H1 (cell line): ENCODE measurements at regions of chr22 and their contacts with region 1.

Region 1: GRCh38 chr22:20238536-20238900 is 29.6 kb downstream of the RTN4R start:
- DNase-seq: peak; percentile 34 to 87
- H3K4me3 ChIP-seq: no peak overlapping the region
- H3K27ac ChIP-seq: no peak overlapping the region
- H3K4me1 ChIP-seq: peaks cover 0 to 16% (median 7%) of the 10 kb centered on the region in 4 experiments; a peak in 5 of 7 replicates
- H3K27me3 ChIP-seq: no peaks in the 10 kb centered on the region
- CTCF ChIP-seq: peak; percentile 92 to 95 (median 94)
- EP300 ChIP-seq: no peak
- POLR2A ChIP-seq: no peak
- RAD21 ChIP-seq: peak; percentile 87 to 91

Region 2: DNA sequence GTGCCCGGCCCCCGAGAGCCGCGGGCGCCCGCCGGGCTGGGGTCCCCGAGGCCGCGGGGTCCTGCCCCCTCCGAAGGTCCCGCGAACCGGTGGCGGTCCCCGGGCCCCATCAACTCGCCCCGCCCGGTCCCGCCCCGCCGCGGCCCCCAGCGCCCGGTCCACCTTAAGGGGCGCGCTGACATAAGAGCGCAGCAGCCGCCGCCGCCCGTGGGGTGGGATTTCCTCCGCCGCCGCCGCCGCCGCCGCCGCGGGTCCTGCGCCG is 107.0 kb before region 1 on chr22 and contains the start of gene ZDHHC8:
- CTCF ChIA-PET with region 1: no interaction called
- POLR2A ChIA-PET with region 1: no interaction called
- DNase-seq: no peak
- H3K4me3 ChIP-seq: peak within 1 kb of the TSS; percentile 53 to 76 (median 58)
- H3K27ac ChIP-seq: no peak within 1 kb of the TSS; the same call in 1 of the 2 replicates
- H3K4me1 ChIP-seq: peaks cover 0 to 12% (median 7%) of the 10 kb centered on the region in 4 experiments; a peak in 4 of 7 replicates
- H3K27me3 ChIP-seq: no peaks in the 10 kb centered on the region; a peak in 2 of 7 replicates
- CTCF ChIP-seq: no peak
- EP300 ChIP-seq: no peak
- POLR2A ChIP-seq: no peak
- RAD21 ChIP-seq: no peak
- total RNA-seq, gene ZDHHC8: 64.0 and 65.6 TPM in 2 replicates

Region 3: GRCh38 chr22:20156611-20157429 is 81.7 kb before region 1 on chr22:
- CTCF ChIA-PET with region 1: interaction called, 93 read pairs
- POLR2A ChIA-PET with region 1: no interaction called
- DNase-seq: peak; percentile 79 to 98
- H3K4me3 ChIP-seq: no peak overlapping the region
- H3K27ac ChIP-seq: no peak overlapping the region
- H3K4me1 ChIP-seq: peaks cover 0 to 7% (median 4%) of the 10 kb centered on the region in 4 experiments; a peak in 4 of 7 replicates
- H3K27me3 ChIP-seq: no peaks in the 10 kb centered on the region
- CTCF ChIP-seq: peak; percentile 97 to 99 (median 99)
- EP300 ChIP-seq: no peak
- POLR2A ChIP-seq: no peak
- RAD21 ChIP-seq: peak; percentile 100

Region 4: GRCh38 chr22:20186183-20186870 is 52.2 kb before region 1 on chr22:
- CTCF ChIA-PET with region 1: interaction called, 43 read pairs
- POLR2A ChIA-PET with region 1: no interaction called
- DNase-seq: peak; percentile 61 to 69
- H3K4me3 ChIP-seq: no peak overlapping the region
- H3K27ac ChIP-seq: no peak overlapping the region
- H3K4me1 ChIP-seq: peaks cover 0 to 4% (median 2%) of the 10 kb centered on the region in 4 experiments; a peak in 2 of 7 replicates
- H3K27me3 ChIP-seq: no peaks in the 10 kb centered on the region
- CTCF ChIP-seq: peak; percentile 54 to 73 (median 64)
- EP300 ChIP-seq: no peak
- POLR2A ChIP-seq: no peak
- RAD21 ChIP-seq: peak; percentile 20 to 53

Region 5: DNA sequence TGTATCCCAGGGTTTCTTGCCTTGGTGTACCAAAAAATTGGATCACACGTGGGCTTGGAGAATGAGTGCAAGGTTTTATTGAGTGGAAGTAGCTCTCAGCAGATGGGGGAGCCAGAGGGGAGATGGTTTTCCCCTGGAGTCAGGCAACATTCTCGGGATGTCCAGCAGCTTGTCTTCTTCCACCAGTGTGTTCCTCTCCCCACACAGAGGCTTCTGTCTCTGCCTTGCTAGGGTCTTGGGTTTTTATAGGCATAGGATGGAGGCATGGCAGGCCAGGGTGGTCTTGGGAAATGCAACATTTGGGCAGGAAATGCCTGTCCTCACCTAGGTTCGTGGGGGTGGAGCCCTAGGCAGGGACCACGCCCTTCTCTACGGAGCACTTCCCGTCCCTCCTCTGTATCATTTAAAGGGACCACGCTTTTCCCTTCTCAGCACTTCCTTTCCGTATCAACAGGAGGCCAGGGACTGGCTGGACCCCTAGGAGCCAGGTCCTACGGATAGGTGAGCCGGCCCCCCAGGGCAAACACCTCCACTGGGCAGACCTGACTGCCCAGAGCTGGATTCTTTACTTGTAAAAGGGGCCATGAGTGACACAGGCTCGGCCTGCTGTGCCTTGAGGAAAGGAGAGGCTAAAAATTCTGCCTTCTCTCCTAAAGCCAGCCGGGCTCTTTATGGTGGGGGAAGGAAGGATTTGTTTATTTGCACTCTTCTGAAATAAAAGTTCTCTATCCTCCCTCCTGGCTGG is 32.4 kb before region 1 on chr22:
- CTCF ChIA-PET with region 1: interaction called, 29 read pairs
- POLR2A ChIA-PET with region 1: interaction called, 3 read pairs
- DNase-seq: no peak
- H3K4me3 ChIP-seq: no peak overlapping the region
- H3K27ac ChIP-seq: no peak overlapping the region
- H3K4me1 ChIP-seq: peaks cover 0 to 23% (median 16%) of the 10 kb centered on the region in 4 experiments; a peak in 6 of 7 replicates
- H3K27me3 ChIP-seq: no peaks in the 10 kb centered on the region
- CTCF ChIP-seq: no peak
- EP300 ChIP-seq: no peak
- POLR2A ChIP-seq: no peak
- RAD21 ChIP-seq: no peak

Region 6: DNA sequence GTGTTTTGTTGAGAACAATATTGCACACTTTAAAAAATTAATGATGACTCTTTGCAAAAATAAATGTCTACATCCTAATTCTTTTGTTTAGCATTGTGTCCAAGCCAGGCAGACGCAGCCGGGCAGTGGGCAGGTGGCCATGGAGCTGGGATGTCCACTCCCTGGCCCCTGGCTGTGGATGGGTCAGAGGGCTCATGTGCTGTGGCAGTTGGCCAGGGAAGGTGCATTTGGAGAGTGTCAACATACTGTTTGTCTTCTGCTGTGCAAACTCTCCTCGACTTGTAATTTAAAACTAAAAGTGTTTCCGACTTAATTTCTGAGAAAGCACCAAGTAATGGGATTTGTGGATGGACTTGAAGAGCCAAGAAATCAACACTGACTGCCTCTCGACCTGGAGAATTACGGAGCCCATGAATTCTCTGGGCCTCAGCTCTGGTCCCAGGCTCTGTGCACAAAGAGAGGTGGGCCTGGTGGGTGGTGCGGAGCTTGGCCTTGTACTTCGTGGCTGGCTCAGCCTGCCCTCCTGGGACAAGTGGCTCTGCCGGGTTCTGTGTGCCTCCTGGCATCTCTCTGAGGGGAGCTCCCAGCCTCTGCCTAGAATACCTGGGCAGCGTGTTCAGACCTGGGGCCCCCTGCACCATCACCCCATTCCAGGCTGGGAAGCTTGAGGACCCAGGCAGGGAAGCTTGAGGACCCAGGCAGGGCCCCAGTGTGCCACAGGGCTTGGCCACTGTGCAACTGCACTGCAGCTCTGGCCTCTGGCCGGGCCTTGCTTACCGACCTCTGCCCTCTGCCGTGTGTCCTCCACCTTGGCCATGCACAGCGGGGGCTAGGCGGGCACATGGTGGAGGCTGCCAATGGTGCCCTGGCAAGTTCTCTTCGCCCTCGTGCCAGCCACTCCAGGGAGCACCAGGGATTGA is 16.8 kb before region 1 on chr22:
- CTCF ChIA-PET with region 1: interaction called, 46 read pairs
- POLR2A ChIA-PET with region 1: no interaction called
- DNase-seq: no peak
- H3K4me3 ChIP-seq: no peak overlapping the region
- H3K27ac ChIP-seq: no peak overlapping the region
- H3K4me1 ChIP-seq: peaks cover 0 to 3% (median 0%) of the 10 kb centered on the region in 4 experiments; a peak in 2 of 7 replicates
- H3K27me3 ChIP-seq: no peaks in the 10 kb centered on the region
- CTCF ChIP-seq: no peak
- EP300 ChIP-seq: no peak
- POLR2A ChIP-seq: no peak
- RAD21 ChIP-seq: no peak

Region 7: GRCh38 chr22:20268279-20269012 is 29.9 kb after region 1 on chr22 and contains the start of gene RTN4R:
- CTCF ChIA-PET with region 1: interaction called, 11 read pairs
- POLR2A ChIA-PET with region 1: interaction called, 3 read pairs
- DNase-seq: peak in 1 of 2 experiments; percentile 86
- H3K4me3 ChIP-seq: peak within 1 kb of the TSS; percentile 30 to 64 (median 51)
- H3K27ac ChIP-seq: peak within 1 kb of the TSS; percentile 63; the same call in 1 of the 2 replicates
- H3K4me1 ChIP-seq: peaks cover 0 to 10% (median 7%) of the 10 kb centered on the region in 4 experiments; a peak in 5 of 7 replicates
- H3K27me3 ChIP-seq: no peaks in the 10 kb centered on the region; a peak in 2 of 7 replicates
- CTCF ChIP-seq: peak; percentile 62 to 91 (median 78)
- EP300 ChIP-seq: no peak
- POLR2A ChIP-seq: no peak; a peak in 1 of 3 replicates
- RAD21 ChIP-seq: peak; percentile 65 to 80
- total RNA-seq, gene RTN4R: 21.8 and 22.5 TPM in 2 replicates